ENCODE measurements at regions of chr22 and their contacts with region 1.

Region 1: GRCh38 chr22:49767355-49768062 is 60.2 kb downstream of the BRD1 start:
- DNase-seq: peak in 1 of 2 donors; percentile 25
- ATAC-seq: peak in 1 of 2 donors; percentile 50
- H3K4me3 ChIP-seq: no peak overlapping the region
- H3K27ac ChIP-seq: no peak overlapping the region
- H3K4me1 ChIP-seq: peaks cover 0 to 11% of the 10 kb centered on the region in 2 donors
- H3K27me3 ChIP-seq: no peaks in the 10 kb centered on the region
- CTCF ChIP-seq: peak; percentile 54 to 68 (median 66)
- POLR2A ChIP-seq: no peak

Region 2: DNA sequence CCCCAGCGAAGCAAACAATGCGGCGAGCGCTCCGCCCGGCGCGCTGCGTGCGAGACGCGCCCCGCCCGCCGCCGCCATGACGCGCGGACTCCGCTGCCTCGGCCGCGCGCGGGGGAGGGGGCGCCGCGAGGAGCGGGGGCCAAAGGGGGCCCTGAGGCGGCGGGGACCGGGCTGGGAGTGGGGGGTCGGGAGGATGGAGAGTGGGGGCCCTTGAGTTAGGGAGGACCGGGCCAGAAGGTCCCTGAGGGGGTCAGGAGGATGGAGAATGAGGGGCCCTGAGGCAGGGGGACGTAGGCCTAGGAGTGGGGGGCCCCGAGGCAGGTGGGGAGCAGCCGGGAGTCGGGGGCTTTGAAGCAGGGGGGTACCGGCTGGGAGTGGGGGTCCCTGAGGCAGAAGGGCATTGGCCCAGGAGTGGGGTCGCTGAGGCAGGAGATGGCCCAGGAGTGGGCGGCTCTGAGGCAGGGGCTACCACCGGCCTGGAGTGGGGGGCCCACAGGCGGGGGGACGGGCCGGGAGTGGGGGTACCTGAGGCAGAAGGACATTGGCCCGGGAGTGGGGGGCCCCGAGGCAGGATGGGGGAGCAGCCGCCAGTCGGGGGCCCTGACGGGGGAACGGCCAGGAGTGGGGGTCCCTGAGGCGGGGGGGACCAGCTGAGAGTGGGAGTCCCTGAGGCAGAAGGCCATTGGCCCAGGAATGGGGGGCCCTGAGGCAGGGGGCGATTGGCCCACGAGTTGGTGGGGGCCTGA is 60.5 kb after region 1 on chr22 and contains the start of gene BRD1:
- in situ Hi-C with region 1: no loop called
- intact Hi-C with region 1: no loop called
- DNase-seq: peak in 1 of 2 donors; percentile 42
- ATAC-seq: peak; percentile 68 to 69
- H3K4me3 ChIP-seq: peak within 1 kb of the TSS; percentile 62 to 70 (median 65)
- H3K27ac ChIP-seq: peak within 1 kb of the TSS; percentile 75 to 90 (median 82)
- H3K4me1 ChIP-seq: peaks cover 19 to 27% of the 10 kb centered on the region in 2 donors
- H3K27me3 ChIP-seq: no peaks in the 10 kb centered on the region
- CTCF ChIP-seq: no peak
- POLR2A ChIP-seq: peak; percentile 20 to 21
- total RNA-seq, gene BRD1: 15.6 to 25.2 (median 18.1) TPM

Region 3: DNA sequence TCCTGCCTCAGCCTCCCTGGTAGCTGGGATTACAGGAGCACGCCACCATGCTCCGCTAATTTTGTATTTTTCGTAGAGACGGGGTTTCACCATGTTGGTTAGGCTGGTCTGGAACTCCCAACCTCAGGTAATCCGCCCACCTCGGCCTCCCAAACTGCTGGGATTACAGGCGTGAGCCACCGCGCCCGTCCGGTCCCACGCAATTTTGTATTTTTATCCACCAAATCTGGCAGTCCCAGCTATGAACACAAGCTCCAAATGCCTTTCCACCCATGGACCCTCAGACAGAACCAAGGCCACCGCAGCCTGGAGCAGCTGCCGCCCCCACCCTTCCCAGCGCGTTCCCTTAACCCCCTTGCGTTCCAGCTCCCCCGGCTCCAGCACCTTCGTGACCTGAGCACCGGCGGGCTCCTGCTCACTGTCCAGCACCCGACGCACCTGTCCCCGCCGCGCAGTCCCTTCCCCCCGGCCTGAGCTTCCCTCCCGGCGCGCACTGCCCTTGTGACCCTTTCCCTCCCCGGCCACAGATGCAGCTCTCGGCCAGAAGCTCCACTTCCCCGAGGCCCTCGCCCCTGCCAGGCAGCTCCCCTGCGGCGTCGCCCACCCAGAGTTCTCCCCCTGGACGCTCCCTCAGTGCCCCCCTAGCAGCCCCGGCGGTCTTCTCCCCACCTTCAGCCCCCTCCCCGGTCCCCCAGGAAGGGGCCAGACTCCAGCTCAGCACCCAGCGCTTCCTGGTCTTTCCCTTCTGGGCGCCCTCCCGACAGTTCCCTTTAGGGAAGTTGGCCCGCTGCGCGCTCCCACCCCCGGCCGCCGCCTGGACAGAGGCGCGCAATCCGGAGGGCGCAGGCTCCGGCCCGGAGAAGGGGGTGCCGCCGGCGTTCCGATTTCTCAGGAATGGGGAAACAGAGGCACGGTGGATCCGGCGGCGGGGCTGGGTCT is 80.5 kb after region 1 on chr22:
- in situ Hi-C with region 1: no loop called
- intact Hi-C with region 1: no loop called
- DNase-seq: no peak
- ATAC-seq: no peak
- H3K4me3 ChIP-seq: peak overlapping the region; percentile 36 to 55 (median 46)
- H3K27ac ChIP-seq: no peak overlapping the region
- H3K4me1 ChIP-seq: peaks cover 13 to 23% of the 10 kb centered on the region in 2 donors
- H3K27me3 ChIP-seq: peaks cover 34 to 42% (median 36%) of the 10 kb centered on the region in 3 donors
- CTCF ChIP-seq: no peak
- POLR2A ChIP-seq: no peak

Region 4: GRCh38 chr22:49979587-49980264 is 212.2 kb after region 1 on chr22:
- in situ Hi-C with region 1: no loop called
- intact Hi-C with region 1: loop called (anchors 5 kb)
- DNase-seq: no peak
- ATAC-seq: peak in 1 of 2 donors; percentile 26
- H3K4me3 ChIP-seq: no peak overlapping the region
- H3K27ac ChIP-seq: no peak overlapping the region
- H3K4me1 ChIP-seq: peaks cover 0 to 4% of the 10 kb centered on the region in 2 donors
- H3K27me3 ChIP-seq: peaks cover 9 to 24% (median 22%) of the 10 kb centered on the region in 3 donors
- CTCF ChIP-seq: peak in 4 of 5 experiments; percentile 25 to 55 (median 49)
- POLR2A ChIP-seq: no peak

Region 5: DNA sequence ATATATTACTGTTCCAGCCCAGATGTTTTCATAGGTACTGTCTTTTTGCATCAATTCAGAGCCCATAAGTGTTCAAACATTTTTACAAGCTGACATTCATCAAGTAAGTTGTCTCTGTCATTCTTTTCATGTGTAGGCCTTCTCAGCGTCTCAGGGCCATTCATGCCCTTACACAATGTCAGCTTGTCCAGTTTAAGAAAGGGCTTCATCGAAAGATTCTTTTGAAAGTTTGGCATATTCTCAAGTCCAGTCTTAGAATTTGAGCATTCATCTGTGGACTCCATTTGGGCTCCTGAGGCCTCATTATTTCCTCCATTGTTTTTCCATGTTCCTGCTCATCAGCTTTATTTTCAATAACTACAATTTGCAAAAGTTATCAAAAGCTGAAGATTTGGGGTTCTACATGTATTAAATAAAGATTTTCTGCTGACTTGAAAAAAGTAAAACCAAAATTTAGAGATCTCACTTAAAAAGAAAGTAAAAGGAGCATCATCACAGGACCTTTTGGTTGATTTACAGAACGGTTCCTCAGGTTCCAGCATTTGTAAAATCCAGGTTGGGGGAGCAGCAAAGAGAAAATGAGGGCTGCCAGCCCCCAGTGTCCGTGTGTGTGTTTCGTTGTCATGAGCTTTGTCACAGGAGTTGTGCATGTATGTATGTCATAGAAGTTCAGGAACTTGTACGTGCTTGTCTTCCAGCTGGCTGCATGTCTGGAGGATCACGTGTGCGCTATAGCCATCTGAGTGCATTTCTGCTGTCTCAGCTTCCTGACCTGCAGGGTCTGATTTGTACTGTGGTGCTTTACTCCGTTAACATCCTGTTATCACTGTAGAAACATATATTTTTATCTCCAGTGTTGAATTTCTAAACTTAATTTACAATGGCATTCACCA is 337.9 kb after region 1 on chr22:
- in situ Hi-C with region 1: no loop called
- intact Hi-C with region 1: no loop called
- DNase-seq: no peak
- ATAC-seq: no peak
- H3K4me3 ChIP-seq: no peak overlapping the region
- H3K27ac ChIP-seq: no peak overlapping the region
- H3K4me1 ChIP-seq: no peaks in the 10 kb centered on the region
- H3K27me3 ChIP-seq: peaks cover 0 to 7% (median 0%) of the 10 kb centered on the region in 3 donors
- CTCF ChIP-seq: no peak
- POLR2A ChIP-seq: no peak